ENCODE measurements at regions of chr22 and their contacts with region 1.

Region 1: GRCh38 chr22:42114721-42115120 is 15.9 kb downstream of the CYP2D6 start:
- DNase-seq: peak; percentile 30
- H3K4me3 ChIP-seq: no peak overlapping the region
- H3K27ac ChIP-seq: no peak overlapping the region
- H3K4me1 ChIP-seq: peaks cover 3% of the 10 kb centered on the region
- CTCF ChIP-seq: peak; percentile 60

Region 2: GRCh38 chr22:41966607-41967240 is 148.0 kb before region 1 on chr22:
- CTCF ChIA-PET with region 1: no interaction called
- POLR2A ChIA-PET with region 1: interaction called, 3 read pairs
- intact Hi-C with region 1: loop called (anchors 5 kb)
- DNase-seq: peak; percentile 63
- H3K4me3 ChIP-seq: no peak overlapping the region
- H3K27ac ChIP-seq: no peak overlapping the region
- H3K4me1 ChIP-seq: no peaks in the 10 kb centered on the region
- CTCF ChIP-seq: peak; percentile 67

Region 3: GRCh38 chr22:42131562-42131961 is 16.8 kb after region 1 on chr22:
- CTCF ChIA-PET with region 1: no interaction called
- POLR2A ChIA-PET with region 1: no interaction called
- intact Hi-C with region 1: no loop called
- DNase-seq: no peak
- H3K4me3 ChIP-seq: no peak overlapping the region
- H3K27ac ChIP-seq: no peak overlapping the region
- H3K4me1 ChIP-seq: no peaks in the 10 kb centered on the region
- CTCF ChIP-seq: no peak

Region 4: GRCh38 chr22:42180349-42180842 is 65.7 kb after region 1 on chr22:
- CTCF ChIA-PET with region 1: no interaction called
- POLR2A ChIA-PET with region 1: no interaction called
- intact Hi-C with region 1: no loop called
- DNase-seq: no peak
- H3K4me3 ChIP-seq: no peak overlapping the region
- H3K27ac ChIP-seq: no peak overlapping the region
- H3K4me1 ChIP-seq: no peaks in the 10 kb centered on the region
- CTCF ChIP-seq: no peak

Measured in OCI-LY7 (cell line).